Panc1 (cell line): ENCODE measurements at regions of chrX and their contacts with region 1.

Region 1: GRCh38 chrX:124406294-124407014 is 60.1 kb downstream of the SH2D1A start:
- DNase-seq: peak; percentile 47
- ATAC-seq: peak; percentile 93
- H3K4me3 ChIP-seq: no peak overlapping the region
- H3K27ac ChIP-seq: no peak overlapping the region
- H3K4me1 ChIP-seq: no peaks in the 10 kb centered on the region
- H3K27me3 ChIP-seq: no peaks in the 10 kb centered on the region
- CTCF ChIP-seq: peak; percentile 66

Region 2: DNA sequence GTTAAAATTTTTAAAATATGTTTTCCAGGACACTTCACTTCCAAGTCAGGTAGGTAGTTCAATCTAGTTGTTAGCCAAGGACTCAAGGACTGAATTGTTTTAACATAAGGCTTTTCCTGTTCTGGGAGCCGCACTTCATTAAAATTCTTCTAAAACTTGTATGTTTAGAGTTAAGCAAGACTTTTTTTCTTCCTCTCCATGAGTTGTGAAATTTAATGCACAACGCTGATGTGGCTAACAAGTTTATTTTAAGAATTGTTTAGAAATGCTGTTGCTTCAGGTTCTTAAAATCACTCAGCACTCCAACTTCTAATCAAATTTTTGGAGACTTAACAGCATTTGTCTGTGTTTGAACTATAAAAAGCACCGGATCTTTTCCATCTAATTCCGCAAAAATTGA is 496.9 kb before region 1 on chrX:
- CTCF ChIA-PET with region 1: no interaction called
- POLR2A ChIA-PET with region 1: no interaction called
- in situ Hi-C with region 1: no loop called
- intact Hi-C with region 1: no loop called
- DNase-seq: no peak
- ATAC-seq: no peak
- H3K4me3 ChIP-seq: no peak overlapping the region
- H3K27ac ChIP-seq: no peak overlapping the region
- H3K4me1 ChIP-seq: no peaks in the 10 kb centered on the region
- H3K27me3 ChIP-seq: no peaks in the 10 kb centered on the region
- CTCF ChIP-seq: no peak

Region 3: DNA sequence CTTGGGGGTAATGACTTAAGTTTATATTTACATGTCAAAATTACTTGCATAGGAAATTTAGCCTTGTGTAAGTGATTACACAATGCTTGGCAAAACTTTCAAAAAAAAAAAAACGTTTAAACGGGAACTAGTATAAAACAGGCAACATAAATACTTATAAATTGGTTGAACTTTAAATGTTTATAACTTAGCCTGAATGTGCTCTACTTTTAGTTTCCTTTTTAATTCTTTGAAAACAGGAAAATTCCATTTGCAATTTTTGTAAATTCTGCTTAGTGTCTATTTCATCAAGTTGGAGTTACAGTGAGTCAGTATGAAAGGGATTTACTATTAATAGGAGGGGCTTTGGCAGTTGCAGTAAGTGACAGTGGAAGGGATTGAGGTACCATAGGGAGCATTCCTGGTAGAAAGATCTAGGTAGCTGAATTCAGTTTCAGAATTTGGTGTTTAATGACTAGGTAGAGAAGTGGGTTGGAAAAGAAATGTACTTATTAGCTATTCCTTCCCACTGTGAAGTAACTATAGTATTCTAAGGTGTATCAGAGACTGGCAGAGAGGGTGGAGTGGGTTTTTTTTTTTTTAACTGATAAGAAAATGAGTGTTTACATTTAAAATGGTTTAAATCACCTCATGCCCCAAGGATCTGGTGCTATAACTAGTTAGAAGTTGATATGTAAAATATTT is 442.2 kb before region 1 on chrX:
- CTCF ChIA-PET with region 1: no interaction called
- POLR2A ChIA-PET with region 1: no interaction called
- in situ Hi-C with region 1: no loop called
- intact Hi-C with region 1: no loop called
- DNase-seq: no peak
- ATAC-seq: no peak
- H3K4me3 ChIP-seq: peak overlapping the region; percentile 88 to 95
- H3K27ac ChIP-seq: peak overlapping the region; percentile 99
- H3K4me1 ChIP-seq: peaks cover 21% of the 10 kb centered on the region; the same call in 1 of the 2 replicates
- H3K27me3 ChIP-seq: no peaks in the 10 kb centered on the region
- CTCF ChIP-seq: no peak

Region 4: DNA sequence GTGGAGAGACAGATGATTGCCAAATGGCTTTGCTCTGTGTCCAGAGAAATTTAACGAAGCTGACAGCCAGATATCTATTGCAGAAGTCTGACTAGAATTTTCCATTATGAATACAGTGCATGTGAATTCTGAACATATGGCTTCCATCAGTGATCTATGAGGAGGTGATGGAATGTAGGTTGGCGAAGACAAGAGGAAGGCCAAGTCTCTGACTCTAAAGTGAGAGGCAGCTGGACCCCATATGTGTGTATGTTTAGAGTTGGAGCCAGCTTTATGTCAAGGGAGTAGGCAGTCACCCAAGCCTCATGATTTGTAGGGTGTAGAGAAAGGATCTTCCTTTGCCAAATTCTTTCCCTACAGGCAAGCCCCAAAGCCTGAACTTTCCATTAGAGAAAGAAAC is 150.2 kb before region 1 on chrX:
- CTCF ChIA-PET with region 1: no interaction called
- POLR2A ChIA-PET with region 1: no interaction called
- in situ Hi-C with region 1: no loop called
- intact Hi-C with region 1: no loop called
- DNase-seq: no peak
- ATAC-seq: no peak
- H3K4me3 ChIP-seq: no peak overlapping the region
- H3K27ac ChIP-seq: no peak overlapping the region
- H3K4me1 ChIP-seq: no peaks in the 10 kb centered on the region
- H3K27me3 ChIP-seq: no peaks in the 10 kb centered on the region
- CTCF ChIP-seq: no peak

Region 5: GRCh38 chrX:125131164-125131563 is 724.7 kb after region 1 on chrX:
- CTCF ChIA-PET with region 1: no interaction called
- POLR2A ChIA-PET with region 1: no interaction called
- in situ Hi-C with region 1: no loop called
- intact Hi-C with region 1: loop called (anchors 1 kb)
- DNase-seq: no peak
- ATAC-seq: 0 out of 2 replicates have a peak, but pooled peaks have one; percentile 60
- H3K4me3 ChIP-seq: no peak overlapping the region
- H3K27ac ChIP-seq: no peak overlapping the region
- H3K4me1 ChIP-seq: no peaks in the 10 kb centered on the region
- H3K27me3 ChIP-seq: no peaks in the 10 kb centered on the region
- CTCF ChIP-seq: peak; percentile 43; the same call in 1 of the 2 replicates